Sciatic nerve (tissue), 2 donors: ENCODE measurements at regions of chr4 and their contacts with region 1.

Region 1: DNA sequence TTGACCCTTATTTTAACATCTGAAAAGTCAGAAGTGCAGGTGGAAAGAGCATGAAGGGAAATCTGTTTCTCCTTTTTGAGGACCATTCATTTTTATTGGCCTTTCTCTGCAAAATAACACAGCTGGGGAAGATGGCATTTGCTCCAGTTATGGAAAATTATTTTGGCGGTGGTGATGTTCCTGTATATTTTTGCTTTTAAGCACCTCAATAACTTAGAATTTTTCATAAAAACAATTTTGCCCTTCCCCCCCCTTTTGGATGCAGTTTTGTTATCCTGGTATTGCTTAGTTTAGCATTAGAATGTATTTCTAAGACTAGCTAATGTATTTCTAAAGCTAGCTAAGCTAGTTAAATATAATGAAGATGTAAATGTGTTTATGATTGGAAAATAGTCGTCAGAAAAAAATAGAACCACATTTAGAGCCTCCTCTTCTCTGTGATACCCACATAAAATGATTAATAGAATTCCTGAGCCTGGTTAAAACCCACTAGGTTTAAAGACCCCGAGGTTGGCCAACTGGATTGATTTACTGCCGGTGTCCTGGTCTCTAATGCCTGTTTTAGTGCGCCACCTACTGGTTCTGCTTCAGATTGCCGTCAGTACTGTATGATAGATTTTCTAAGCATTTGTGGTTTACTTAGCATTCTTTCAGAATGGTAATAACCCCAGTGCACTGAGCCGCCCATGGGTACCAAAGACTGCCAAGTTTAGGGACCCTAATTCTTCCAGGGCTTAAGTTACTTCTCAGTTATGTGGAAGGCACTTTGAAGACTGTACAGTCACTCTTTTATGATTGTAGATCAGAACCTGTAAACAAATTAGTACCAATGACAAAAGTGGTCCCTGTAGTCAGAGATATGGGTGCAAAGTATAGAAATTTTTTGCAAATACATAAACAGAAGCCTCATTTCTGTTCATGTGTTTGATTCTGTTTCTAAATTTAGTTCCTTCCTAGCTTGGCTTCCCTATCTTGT is 11.4 kb downstream of the KLF3 start:
- DNase-seq: peak; percentile 90
- ATAC-seq: peak; percentile 40

Region 2: DNA sequence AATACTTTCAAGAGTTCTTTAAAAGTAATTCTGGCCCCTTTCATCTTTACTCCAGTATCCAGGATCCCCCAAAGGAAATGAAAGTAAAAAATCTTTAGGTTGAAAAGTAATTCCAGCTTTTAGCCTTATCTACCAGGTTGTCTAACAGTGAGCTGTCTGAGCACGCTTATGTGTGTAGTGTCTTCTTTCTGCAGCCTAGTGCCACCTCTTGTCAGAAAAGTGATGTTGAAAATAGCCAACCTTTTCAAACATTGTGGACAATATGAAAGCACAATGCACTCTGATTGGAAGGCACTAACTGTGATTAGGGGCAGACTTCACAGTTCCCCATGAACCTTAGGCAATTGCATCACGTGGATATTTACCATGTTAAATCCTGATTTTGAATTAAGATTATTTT is 1081.3 kb before region 1 on chr4:
- intact Hi-C with region 1: no loop called
- DNase-seq: no peak
- ATAC-seq: no peak

Region 3: DNA sequence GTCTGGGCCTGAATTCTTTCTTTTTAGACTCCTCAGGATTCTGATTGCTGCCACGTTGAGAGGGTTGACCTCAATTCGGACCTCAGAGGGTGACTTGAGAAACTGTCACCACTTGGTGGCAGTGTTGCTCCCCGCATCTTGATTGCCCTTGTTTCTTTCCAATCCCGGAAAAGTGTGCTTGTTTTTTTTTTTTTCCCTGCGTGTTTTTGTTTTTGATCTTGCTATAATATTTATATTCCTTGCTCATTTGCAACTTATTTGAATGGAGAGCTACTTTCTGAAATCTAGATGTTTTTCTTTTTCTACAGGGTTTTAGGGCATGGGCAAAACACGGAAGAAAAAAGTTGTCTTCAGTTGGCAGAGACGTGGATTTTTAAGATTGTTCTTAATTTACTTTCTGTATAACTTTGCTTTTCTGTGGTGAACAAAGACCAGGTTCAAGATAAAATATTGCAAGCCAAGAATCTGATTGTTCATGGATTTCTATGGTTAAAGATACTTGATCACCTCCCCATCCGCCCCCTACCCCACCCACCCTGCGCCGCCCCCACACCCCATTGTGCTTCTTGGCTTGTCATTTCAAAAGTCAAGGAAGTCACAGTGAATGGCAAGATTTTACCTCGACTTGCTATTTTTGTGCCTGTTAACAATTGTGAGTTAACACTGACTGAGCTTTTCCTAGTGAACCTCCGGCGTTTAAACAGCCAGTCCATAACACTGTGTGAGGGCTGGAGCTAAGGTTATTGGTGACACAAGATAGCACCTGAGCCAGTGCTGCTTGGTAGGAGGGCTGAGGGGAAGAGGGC is 613.1 kb before region 1 on chr4:
- intact Hi-C with region 1: loop called (anchors 10 kb)
- DNase-seq: peak; percentile 90
- ATAC-seq: peak; percentile 88

Region 4: GRCh38 chr4:38179690-38180377 is 495.6 kb before region 1 on chr4:
- intact Hi-C with region 1: loop called (anchors 5 kb)
- DNase-seq: peak; percentile 87
- ATAC-seq: peak; percentile 77

Region 5: GRCh38 chr4:38730830-38731646 is 55.6 kb after region 1 on chr4:
- intact Hi-C with region 1: loop called (anchors 10 kb)
- DNase-seq: peak; percentile 94
- ATAC-seq: peak; percentile 94